K562 (cell line): ENCODE measurements at regions of chr1 and their contacts with region 1.

Region 1: DNA sequence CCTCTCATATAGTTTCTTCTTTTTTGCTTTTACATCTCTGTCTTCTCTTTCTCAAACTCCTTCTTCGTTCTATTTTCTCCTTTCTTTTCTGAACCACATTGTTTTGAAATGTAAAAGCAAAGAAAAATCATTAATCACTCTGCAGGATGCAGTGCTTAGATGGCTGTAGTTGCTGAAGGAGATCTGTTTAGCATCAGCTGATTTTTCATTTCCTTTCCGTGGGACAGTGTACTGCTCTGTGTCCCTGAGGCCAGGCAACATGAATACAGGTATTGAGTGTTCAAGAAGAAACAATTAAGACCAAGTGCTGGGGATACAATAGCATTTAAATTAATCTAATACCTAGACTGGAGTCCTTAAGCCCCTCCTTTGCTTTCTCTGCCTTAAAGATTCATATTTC is 257.2 kb upstream of the SPAG17 start:
- DNase-seq: no peak
- ATAC-seq: no peak
- H3K4me3 ChIP-seq: no peak overlapping the region
- H3K27ac ChIP-seq: no peak overlapping the region
- H3K4me1 ChIP-seq: no peaks in the 10 kb centered on the region
- H3K27me3 ChIP-seq: no peaks in the 10 kb centered on the region
- CTCF ChIP-seq: no peak
- EP300 ChIP-seq: no peak
- POLR2A ChIP-seq: no peak
- RAD21 ChIP-seq: no peak

Region 2: DNA sequence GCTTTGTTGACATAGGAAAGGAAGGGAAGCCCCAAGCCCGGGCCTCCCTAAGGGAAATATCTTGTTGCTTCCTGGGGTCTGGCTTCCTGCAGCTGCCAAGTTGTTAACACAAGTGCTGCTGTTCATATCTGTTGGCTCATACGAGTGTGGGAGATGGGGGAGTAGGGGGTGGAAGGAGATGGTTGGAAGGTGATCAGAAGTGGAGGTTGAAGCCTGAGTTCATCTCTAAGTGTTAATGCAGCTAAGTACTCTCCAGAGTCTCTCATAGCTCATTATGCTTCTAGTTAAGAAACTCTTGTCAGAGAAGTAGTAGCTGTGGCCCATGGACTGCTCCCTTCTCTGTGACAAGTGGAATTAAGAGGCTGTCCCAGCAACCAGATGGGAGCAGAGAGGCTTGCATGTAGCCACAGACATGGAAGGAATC is 62.0 kb after region 1 on chr1:
- CTCF ChIA-PET with region 1: no interaction called
- POLR2A ChIA-PET with region 1: no interaction called
- in situ Hi-C with region 1: no loop called
- intact Hi-C with region 1: loop called (anchors 10 kb)
- DNase-seq: no peak
- ATAC-seq: no peak
- H3K4me3 ChIP-seq: no peak overlapping the region
- H3K27ac ChIP-seq: no peak overlapping the region
- H3K4me1 ChIP-seq: no peaks in the 10 kb centered on the region
- H3K27me3 ChIP-seq: no peaks in the 10 kb centered on the region
- CTCF ChIP-seq: no peak
- EP300 ChIP-seq: no peak
- POLR2A ChIP-seq: no peak
- RAD21 ChIP-seq: no peak